MCF 10A (cell line): ENCODE measurements at regions of chr1 and their contacts with region 1.

Region 1: GRCh38 chr1:74771913-74772515 is 39.1 kb downstream of the TYW3 start:
- DNase-seq: peak; percentile 68
- H3K4me3 Mint-ChIP-seq: no peak overlapping the region
- H3K27ac Mint-ChIP-seq: no peak overlapping the region
- H3K4me1 Mint-ChIP-seq: peaks cover 4% of the 10 kb centered on the region
- H3K27me3 Mint-ChIP-seq: peaks cover 11% of the 10 kb centered on the region
- CTCF ChIP-seq: peak; percentile 51

Region 2: GRCh38 chr1:74343216-74343615 is 428.8 kb before region 1 on chr1:
- CTCF ChIA-PET with region 1: no interaction called
- POLR2A ChIA-PET with region 1: no interaction called
- intact Hi-C with region 1: no loop called
- DNase-seq: peak; percentile 9
- H3K4me3 Mint-ChIP-seq: no peak overlapping the region
- H3K27ac Mint-ChIP-seq: no peak overlapping the region
- H3K4me1 Mint-ChIP-seq: no peaks in the 10 kb centered on the region
- H3K27me3 Mint-ChIP-seq: no peaks in the 10 kb centered on the region
- CTCF ChIP-seq: no peak

Region 3: GRCh38 chr1:75035536-75035935 is 263.5 kb after region 1 on chr1:
- CTCF ChIA-PET with region 1: no interaction called
- POLR2A ChIA-PET with region 1: no interaction called
- intact Hi-C with region 1: no loop called
- DNase-seq: peak; percentile 63
- H3K4me3 Mint-ChIP-seq: no peak overlapping the region
- H3K27ac Mint-ChIP-seq: no peak overlapping the region
- H3K4me1 Mint-ChIP-seq: peaks cover 5% of the 10 kb centered on the region
- H3K27me3 Mint-ChIP-seq: no peaks in the 10 kb centered on the region
- CTCF ChIP-seq: no peak

Region 4: DNA sequence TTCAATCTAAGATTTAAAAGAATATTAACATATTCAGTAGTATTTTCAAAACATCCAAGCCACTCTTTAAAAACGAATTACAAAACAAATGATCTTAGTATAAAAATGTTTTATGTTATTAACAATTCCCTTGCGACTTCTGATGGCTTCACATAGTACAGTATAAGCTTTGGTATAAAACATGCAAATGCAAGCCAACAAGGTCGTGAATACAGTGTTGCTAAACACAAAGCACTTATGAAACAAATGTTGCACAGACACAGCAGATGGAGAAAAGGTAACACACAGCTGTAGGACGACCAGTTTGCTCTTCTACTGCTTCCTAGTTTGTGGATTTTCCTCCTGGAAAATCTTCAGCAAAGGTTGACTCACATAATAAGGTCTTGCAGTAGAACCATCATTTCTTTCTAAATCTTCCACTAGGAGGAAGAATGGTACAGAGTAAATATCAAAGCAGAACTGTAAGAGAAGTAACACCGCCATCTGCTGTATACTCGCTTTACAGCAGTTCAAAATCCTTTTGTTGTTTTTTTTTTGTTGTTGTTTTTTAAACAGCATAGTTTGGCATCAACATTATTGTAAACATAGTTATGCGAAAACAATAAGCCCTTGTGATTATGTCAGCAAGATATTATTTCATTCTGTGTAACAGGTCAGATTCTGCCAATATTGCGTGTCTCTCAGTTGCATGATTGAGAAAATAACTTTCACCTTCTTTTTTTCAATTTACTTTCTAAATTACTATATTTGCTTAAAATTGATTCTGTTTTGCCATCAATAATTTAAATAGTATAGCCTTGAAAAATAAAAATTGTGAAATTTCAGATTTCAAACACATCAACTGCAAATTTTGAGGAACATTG is 431.6 kb after region 1 on chr1:
- CTCF ChIA-PET with region 1: interaction called, 35 read pairs
- POLR2A ChIA-PET with region 1: interaction called, 8 read pairs
- intact Hi-C with region 1: loop called (anchors 1 kb)
- DNase-seq: peak; percentile 52
- H3K4me3 Mint-ChIP-seq: no peak overlapping the region
- H3K27ac Mint-ChIP-seq: no peak overlapping the region
- H3K4me1 Mint-ChIP-seq: peaks cover 3% of the 10 kb centered on the region
- H3K27me3 Mint-ChIP-seq: peaks cover 7% of the 10 kb centered on the region
- CTCF ChIP-seq: peak; percentile 79

Region 5: GRCh38 chr1:75208862-75209261 is 436.8 kb after region 1 on chr1:
- CTCF ChIA-PET with region 1: interaction called, 31 read pairs
- POLR2A ChIA-PET with region 1: interaction called, 8 read pairs
- intact Hi-C with region 1: no loop called
- DNase-seq: no peak
- H3K4me3 Mint-ChIP-seq: no peak overlapping the region
- H3K27ac Mint-ChIP-seq: no peak overlapping the region
- H3K4me1 Mint-ChIP-seq: no peaks in the 10 kb centered on the region
- H3K27me3 Mint-ChIP-seq: no peaks in the 10 kb centered on the region
- CTCF ChIP-seq: no peak